A549 (cell line): ENCODE measurements at regions of chr22 and their contacts with region 1.

Region 1: DNA sequence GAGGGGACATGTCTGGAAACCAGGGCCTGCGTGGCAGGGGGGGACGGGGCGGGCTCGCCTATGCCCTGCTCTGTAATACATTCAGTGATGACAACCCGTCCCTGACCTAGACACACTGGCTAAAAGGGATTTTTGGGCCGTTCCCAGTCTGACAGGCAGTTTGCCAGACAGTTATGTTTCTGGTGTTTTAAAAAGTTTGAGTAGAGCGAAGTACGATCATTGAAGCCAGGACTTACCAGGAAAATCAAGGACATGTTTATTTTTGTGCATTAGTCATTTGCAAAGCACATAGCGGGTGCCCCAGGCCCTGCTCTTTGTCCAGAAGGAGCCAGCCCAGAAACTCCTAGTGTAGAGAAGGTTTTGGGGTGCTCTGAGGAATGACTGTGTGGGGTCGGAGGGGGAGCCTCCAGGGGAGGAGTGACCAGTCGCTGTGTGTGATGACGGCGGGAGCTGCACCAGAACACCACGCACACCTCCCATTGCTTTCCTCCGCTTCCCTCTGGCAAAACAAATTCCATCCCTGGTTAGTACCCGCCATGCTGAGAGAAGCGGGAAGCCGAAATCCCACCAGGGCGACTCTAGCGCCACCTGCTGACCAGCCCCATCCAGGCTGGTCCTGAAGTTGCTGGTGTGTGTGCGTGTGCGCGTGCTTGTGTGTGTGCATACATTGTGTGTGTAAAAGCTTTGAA is 50.8 kb downstream of the FBLN1 start:
- DNase-seq: peak; percentile 82 to 83
- ATAC-seq: peak; percentile 62 to 74
- H3K4me3 ChIP-seq: no peak overlapping the region
- H3K27ac ChIP-seq: peak overlapping the region; percentile 80 to 96
- H3K4me1 ChIP-seq: peaks cover 43% of the 10 kb centered on the region
- CTCF ChIP-seq: peak; percentile 88
- EP300 ChIP-seq: no peak
- POLR2A ChIP-seq: no peak
- RAD21 ChIP-seq: peak; percentile 87 to 88

Region 2: DNA sequence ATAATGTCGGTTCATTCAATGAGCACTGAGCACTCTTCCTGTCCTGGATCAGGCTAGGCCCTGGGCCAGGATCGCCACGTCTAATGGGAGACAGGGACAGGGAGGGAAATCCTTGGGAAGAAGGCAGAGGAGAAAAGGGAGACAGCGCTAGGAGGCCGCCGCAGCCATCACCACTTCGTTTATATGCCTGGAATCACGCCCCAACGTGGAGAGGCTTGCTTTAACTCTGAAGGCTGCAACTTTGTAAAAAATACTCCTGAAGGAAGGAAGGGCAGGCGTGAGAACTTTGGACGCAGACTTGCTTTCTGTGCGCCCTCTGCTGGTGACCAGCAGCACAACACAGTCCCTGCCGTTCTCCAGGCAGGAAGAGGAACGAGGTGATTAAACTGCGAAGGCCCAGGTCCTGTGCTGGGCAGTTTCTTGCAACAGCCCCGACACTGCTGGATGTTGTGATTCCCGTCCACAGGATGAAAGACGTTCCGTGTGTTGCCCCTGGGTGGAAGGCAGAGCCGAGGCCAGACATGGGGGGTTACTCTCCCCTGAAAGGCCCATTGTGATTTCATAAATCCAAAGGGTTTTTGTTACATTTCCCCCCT is 117.9 kb before region 1 on chr22:
- CTCF ChIA-PET with region 1: interaction called, 71 read pairs
- POLR2A ChIA-PET with region 1: no interaction called
- DNase-seq: peak; percentile 68 to 84
- ATAC-seq: peak; percentile 90 to 97
- H3K4me3 ChIP-seq: no peak overlapping the region
- H3K27ac ChIP-seq: peak overlapping the region; percentile 58 to 81
- H3K4me1 ChIP-seq: peaks cover 9% of the 10 kb centered on the region
- CTCF ChIP-seq: peak; percentile 82
- EP300 ChIP-seq: no peak
- POLR2A ChIP-seq: no peak
- RAD21 ChIP-seq: peak; percentile 73 to 78

Region 3: DNA sequence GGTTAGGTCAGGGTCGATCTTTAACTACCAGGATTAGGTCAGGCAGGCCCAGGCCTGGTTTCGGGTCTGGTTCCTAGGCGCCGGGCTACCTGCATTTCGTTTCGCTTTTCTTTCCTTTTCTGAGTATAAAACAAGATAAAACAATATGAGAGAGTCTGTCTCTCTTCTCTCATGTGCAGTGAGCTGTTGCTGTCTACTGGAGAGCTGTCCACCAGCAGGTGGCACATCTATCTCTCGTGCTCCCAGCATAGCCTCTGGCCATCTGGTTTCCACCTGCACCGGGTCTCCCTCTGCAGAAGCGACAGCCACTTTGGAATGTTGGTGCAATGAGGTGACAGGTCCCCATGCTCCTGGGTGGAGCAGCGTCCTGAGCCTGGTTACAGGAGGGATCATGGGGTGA is 112.4 kb before region 1 on chr22:
- CTCF ChIA-PET with region 1: interaction called, 71 read pairs
- POLR2A ChIA-PET with region 1: no interaction called
- DNase-seq: peak; percentile 46 to 57
- ATAC-seq: peak; percentile 98 to 99
- H3K4me3 ChIP-seq: no peak overlapping the region
- H3K27ac ChIP-seq: peak overlapping the region in 1 of 2 experiments; percentile 64; a peak in 2 of 6 replicates
- H3K4me1 ChIP-seq: peaks cover 3% of the 10 kb centered on the region; the same call in 1 of the 3 replicates
- CTCF ChIP-seq: peak; percentile 62
- EP300 ChIP-seq: no peak
- POLR2A ChIP-seq: no peak
- RAD21 ChIP-seq: peak; percentile 67 to 74

Region 4: GRCh38 chr22:45564349-45565032 is 11.0 kb after region 1 on chr22:
- CTCF ChIA-PET with region 1: interaction called, 19 read pairs
- POLR2A ChIA-PET with region 1: no interaction called
- DNase-seq: no peak
- ATAC-seq: no peak
- H3K4me3 ChIP-seq: no peak overlapping the region
- H3K27ac ChIP-seq: no peak overlapping the region
- H3K4me1 ChIP-seq: no peaks in the 10 kb centered on the region
- CTCF ChIP-seq: no peak
- EP300 ChIP-seq: no peak
- POLR2A ChIP-seq: no peak
- RAD21 ChIP-seq: no peak

Region 5: GRCh38 chr22:45629469-45630089 is 76.1 kb after region 1 on chr22:
- CTCF ChIA-PET with region 1: no interaction called
- POLR2A ChIA-PET with region 1: no interaction called
- DNase-seq: no peak
- ATAC-seq: no peak
- H3K4me3 ChIP-seq: no peak overlapping the region
- H3K27ac ChIP-seq: peak overlapping the region; percentile 59 to 99; a peak in 5 of 6 replicates
- H3K4me1 ChIP-seq: peaks cover 44% of the 10 kb centered on the region
- CTCF ChIP-seq: no peak
- EP300 ChIP-seq: no peak
- POLR2A ChIP-seq: no peak
- RAD21 ChIP-seq: no peak